BJ (cell line): ENCODE measurements at regions of chr1 and their contacts with region 1.

Region 1: GRCh38 chr1:151098126-151098525 is 27.6 kb downstream of the GABPB2 start:
- DNase-seq: no peak
- H3K4me3 ChIP-seq: no peak overlapping the region
- H3K27me3 ChIP-seq: no peaks in the 10 kb centered on the region
- CTCF ChIP-seq: no peak

Region 2: DNA sequence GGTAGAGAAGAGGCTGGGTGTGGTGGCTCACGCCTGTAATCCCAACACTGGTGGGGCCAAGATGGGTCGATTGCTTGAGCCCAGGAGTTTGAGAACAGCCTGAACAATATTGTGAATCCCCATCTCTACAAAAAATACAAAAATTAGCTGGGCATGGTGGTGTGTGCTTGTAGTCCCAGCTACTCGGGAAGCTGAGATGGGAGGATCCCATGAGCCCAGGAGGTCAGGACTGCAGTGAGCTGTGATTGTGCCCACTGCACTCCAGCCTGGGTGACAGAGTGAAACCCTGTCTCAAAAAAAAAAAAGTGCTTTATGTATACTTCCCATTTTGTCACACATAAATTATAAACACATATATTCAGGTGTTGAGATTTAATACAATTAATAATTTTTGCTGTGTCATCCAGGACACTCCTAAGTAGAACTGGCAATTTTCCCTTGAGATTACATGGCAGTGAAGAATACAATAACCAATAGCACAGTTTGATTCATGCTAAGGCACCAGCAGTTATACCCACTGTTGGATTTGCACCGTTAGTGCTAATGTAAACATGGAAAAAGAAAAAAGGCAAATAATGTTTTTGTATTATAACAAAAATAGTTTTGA is 12.1 kb before region 1 on chr1:
- CTCF ChIA-PET with region 1: interaction called, 11 read pairs
- POLR2A ChIA-PET with region 1: no interaction called
- DNase-seq: no peak
- H3K4me3 ChIP-seq: no peak overlapping the region
- H3K27me3 ChIP-seq: no peaks in the 10 kb centered on the region
- CTCF ChIP-seq: no peak

Region 3: GRCh38 chr1:151156515-151156819 is 58.3 kb after region 1 on chr1 and contains the start of gene TNFAIP8L2:
- CTCF ChIA-PET with region 1: interaction called, 124 read pairs
- POLR2A ChIA-PET with region 1: no interaction called
- DNase-seq: no peak
- H3K4me3 ChIP-seq: no peak within 1 kb of the TSS
- H3K27me3 ChIP-seq: no peaks in the 10 kb centered on the region
- CTCF ChIP-seq: no peak
- polyA plus RNA-seq, gene TNFAIP8L2: not detected in 2 replicates

Region 4: GRCh38 chr1:151189638-151190445 is 91.7 kb after region 1 on chr1 and contains the start of gene VPS72:
- CTCF ChIA-PET with region 1: no interaction called
- POLR2A ChIA-PET with region 1: interaction called, 10 read pairs
- DNase-seq: peak; percentile 57
- H3K4me3 ChIP-seq: peak within 1 kb of the TSS; percentile 81
- H3K27me3 ChIP-seq: no peaks in the 10 kb centered on the region
- CTCF ChIP-seq: no peak
- polyA plus RNA-seq, gene VPS72: 60.4 and 71.0 TPM in 2 replicates

Region 5: DNA sequence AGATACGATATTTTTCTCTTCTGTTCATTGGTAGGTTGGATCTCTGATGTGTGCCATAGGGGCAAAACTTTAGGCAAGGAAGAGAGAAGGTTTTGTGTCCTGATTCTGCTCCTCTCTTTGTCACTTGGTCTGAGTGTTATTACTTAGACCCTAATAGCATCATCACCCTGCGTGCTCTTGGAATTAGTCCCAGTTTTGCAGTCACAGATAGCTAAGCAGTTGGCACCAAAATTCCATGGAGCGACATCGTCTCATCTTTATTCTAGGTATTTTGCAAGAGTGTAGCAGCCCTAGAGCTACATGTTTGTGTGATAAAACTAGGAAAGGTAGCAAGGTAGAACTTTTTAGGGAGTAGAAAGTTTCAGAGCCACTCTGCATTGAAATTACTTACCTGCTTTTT is 124.0 kb after region 1 on chr1:
- CTCF ChIA-PET with region 1: no interaction called
- POLR2A ChIA-PET with region 1: no interaction called
- DNase-seq: no peak
- H3K4me3 ChIP-seq: no peak overlapping the region
- H3K27me3 ChIP-seq: no peaks in the 10 kb centered on the region
- CTCF ChIP-seq: no peak